ENCODE measurements at regions of chr10 and their contacts with region 1.

Region 1: GRCh38 chr10:91051829-91052228 is 130.9 kb upstream of the ANKRD1 start:
- DNase-seq: peak in 2 of 3 donors; percentile 57 to 78
- ATAC-seq: peak; percentile 54 to 64
- H3K4me3 ChIP-seq: no peak overlapping the region
- H3K27ac ChIP-seq: no peak overlapping the region
- H3K4me1 ChIP-seq: peaks cover 7% of the 10 kb centered on the region
- H3K27me3 ChIP-seq: no peaks in the 10 kb centered on the region

Region 2: GRCh38 chr10:90822508-90822907 is 229.3 kb before region 1 on chr10:
- intact Hi-C with region 1: no loop called
- DNase-seq: no peak
- ATAC-seq: no peak
- H3K4me3 ChIP-seq: no peak overlapping the region
- H3K27ac ChIP-seq: no peak overlapping the region
- H3K4me1 ChIP-seq: no peaks in the 10 kb centered on the region
- H3K27me3 ChIP-seq: no peaks in the 10 kb centered on the region

Region 3: DNA sequence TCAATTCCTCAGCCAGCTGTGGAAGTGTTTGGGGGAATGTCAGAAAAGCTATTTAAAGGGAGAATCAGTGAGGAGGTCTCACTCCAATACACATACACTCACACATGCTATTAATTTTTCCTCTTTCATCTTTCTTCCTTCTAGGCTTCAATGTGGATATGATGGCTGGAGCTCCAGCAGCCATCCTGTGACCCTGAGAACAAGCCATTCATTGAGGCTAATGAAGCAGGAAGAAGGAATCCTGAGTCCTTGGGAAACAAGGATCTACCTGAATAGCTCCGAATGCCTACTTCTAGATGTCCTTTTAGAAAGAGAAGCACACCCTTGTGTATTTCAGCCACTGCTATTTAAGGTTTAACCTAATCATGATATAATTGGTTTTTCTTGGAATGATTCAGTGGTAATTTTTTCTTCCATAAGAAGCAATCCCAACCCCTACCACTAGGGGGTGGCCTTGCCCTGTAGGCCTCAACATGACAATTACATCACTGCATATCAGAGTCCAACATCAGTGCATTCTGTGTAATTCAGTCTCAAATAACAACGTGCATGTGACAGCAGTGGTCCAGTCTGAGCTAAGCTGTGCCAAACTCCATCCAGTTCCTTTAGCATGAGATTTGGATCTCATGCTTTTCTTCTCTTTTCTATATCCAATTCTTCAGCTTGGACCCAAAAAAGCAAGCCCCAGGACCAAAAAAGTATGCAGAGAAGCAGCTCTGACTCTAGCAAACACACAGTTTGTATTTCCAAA is 45.7 kb before region 1 on chr10:
- intact Hi-C with region 1: loop called in 1 of 4 experiments (anchors 5 kb)
- DNase-seq: peak in 2 of 3 donors; percentile 37 to 55
- ATAC-seq: peak; percentile 66 to 76
- H3K4me3 ChIP-seq: no peak overlapping the region
- H3K27ac ChIP-seq: no peak overlapping the region
- H3K4me1 ChIP-seq: peaks cover 2% of the 10 kb centered on the region
- H3K27me3 ChIP-seq: no peaks in the 10 kb centered on the region

Measured in right cardiac atrium (tissue), 5 donors.